Dendritic cell treated with granulocyte-macrophage colony-stimulating factor and Interleukin-4, amounts not matched to agents 40 ng/mL and 50 ng/mL, for 4 days (primary cell): ENCODE measurements at regions of chr1 and their contacts with region 1.

Region 1: DNA sequence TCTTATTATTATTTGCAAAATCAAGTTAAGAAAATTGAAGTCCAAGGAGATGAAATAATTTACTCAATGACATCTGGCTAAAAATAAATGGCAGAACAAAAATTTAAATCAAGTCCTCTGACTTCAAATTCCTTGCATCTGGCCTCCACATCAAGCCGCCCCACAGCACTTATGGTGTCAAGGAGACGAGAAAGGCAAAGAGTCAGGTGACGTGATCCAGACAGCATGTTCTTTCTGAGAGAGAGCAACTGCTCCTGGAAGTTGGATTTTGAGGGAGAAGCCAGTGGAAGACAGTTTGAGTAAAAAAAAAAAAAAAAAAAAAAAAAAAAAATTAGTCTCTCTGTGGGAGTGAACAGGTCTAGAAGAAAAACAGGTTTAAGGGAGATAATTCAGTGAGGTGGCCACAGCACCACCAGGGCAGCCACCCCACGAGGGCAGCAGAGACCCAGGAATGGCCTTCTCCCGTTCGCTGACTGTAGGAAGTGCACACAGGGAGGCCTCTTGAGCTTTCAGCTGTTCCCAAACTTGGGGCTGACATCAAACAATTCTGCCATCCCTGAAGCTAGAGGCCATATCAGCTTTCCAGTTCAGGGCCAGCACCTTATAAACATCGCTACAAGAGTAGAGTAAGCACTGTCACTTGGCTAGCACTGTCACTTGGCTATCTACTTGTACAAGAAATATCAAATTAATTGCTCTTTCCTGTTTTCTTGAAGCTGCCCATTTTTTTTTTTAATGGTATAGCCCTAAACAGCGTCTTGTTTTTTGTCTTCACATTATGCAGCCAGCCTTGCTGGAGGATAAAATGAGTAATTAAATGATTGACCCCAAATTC is 7.8 kb downstream of the C1orf162 start:
- H3K4me3 Mint-ChIP-seq: no peak overlapping the region
- H3K27ac Mint-ChIP-seq: peak overlapping the region; percentile 24
- H3K4me1 Mint-ChIP-seq: peaks cover 86% of the 10 kb centered on the region
- H3K27me3 Mint-ChIP-seq: no peaks in the 10 kb centered on the region

Region 2: GRCh38 chr1:111656086-111657017 is 174.7 kb after region 1 on chr1:
- intact Hi-C with region 1: loop called (anchors 2 kb)
- H3K4me3 Mint-ChIP-seq: no peak overlapping the region
- H3K27ac Mint-ChIP-seq: peak overlapping the region; percentile 10
- H3K4me1 Mint-ChIP-seq: peaks cover 51% of the 10 kb centered on the region
- H3K27me3 Mint-ChIP-seq: no peaks in the 10 kb centered on the region

Region 3: DNA sequence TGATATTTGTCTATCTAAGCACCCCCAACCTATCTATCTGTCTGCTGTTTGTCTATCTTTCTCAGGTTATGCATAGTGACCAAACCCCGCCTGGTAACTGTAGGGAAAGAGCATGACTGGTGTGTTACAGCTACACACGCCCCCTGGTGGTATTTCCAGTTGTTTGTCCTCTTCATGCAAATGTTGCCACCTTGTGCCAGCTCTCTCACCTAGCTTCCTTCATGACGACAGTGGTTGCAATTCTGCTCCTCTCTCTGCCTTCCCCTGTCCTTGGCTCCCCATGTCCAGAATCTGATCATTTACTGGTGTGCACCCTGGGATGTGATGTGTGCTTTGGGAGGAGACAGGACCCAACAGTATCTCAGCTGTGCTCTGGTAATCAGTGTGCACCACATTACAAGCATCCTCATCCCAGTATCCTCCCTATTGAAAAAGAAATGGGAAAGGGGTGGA is 265.7 kb after region 1 on chr1:
- intact Hi-C with region 1: loop called (anchors 2 kb)
- H3K4me3 Mint-ChIP-seq: no peak overlapping the region
- H3K27ac Mint-ChIP-seq: peak overlapping the region; percentile 13
- H3K4me1 Mint-ChIP-seq: peaks cover 39% of the 10 kb centered on the region
- H3K27me3 Mint-ChIP-seq: peaks cover 20% of the 10 kb centered on the region

Region 4: GRCh38 chr1:111769517-111770146 is 288.0 kb after region 1 on chr1:
- intact Hi-C with region 1: loop called (anchors 2 kb)
- H3K4me3 Mint-ChIP-seq: no peak overlapping the region
- H3K27ac Mint-ChIP-seq: no peak overlapping the region
- H3K4me1 Mint-ChIP-seq: no peaks in the 10 kb centered on the region
- H3K27me3 Mint-ChIP-seq: no peaks in the 10 kb centered on the region